Activated T-helper 1 cell treated with anti-CD3 and anti-CD28 coated beads, Interleukin-12 subunit alpha, Interleukin-12 subunit beta, Interleukin-2, Interleukin-4 antibody, amounts not matched to agents 30 ng/mL and 10 ng/mL and 1 ng/mL, durations not matched to agents 14 hours and 24 hours and 36 hours (primary cell): ENCODE measurements at regions of chr9 and their contacts with region 1.

Region 1: GRCh38 chr9:111916234-111916645 is 19.6 kb downstream of the UGCG start:
- DNase-seq: no peak
- H3K4me3 Mint-ChIP-seq: peak overlapping the region; percentile 2
- H3K27ac Mint-ChIP-seq: peak overlapping the region; percentile 74
- H3K4me1 Mint-ChIP-seq: peaks cover 54% of the 10 kb centered on the region
- H3K27me3 Mint-ChIP-seq: peaks cover 4% of the 10 kb centered on the region

Region 2: DNA sequence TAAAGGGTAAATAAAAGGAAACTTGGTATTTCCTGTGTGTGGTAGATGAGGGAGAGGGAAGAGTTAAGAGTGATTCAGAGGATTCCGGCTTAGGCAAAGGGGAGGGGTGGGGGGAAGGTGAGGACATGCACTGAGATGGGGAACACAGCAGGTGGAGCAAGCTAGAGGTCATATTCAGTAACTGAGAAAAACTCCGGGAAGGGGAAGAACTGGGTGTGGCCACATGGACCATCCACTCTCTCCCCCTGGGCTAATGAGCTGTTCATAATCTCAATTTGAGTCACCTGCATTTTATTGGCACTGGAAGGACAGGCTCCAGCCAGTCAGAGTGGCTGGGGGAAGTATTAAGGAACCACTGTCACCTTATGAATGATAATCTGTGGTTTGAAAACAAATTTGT is 64.7 kb before region 1 on chr9:
- intact Hi-C with region 1: no loop called
- DNase-seq: no peak
- H3K4me3 Mint-ChIP-seq: no peak overlapping the region
- H3K27ac Mint-ChIP-seq: no peak overlapping the region
- H3K4me1 Mint-ChIP-seq: no peaks in the 10 kb centered on the region
- H3K27me3 Mint-ChIP-seq: peaks cover 4% of the 10 kb centered on the region

Region 3: GRCh38 chr9:111870774-111871498 is 45.3 kb before region 1 on chr9:
- intact Hi-C with region 1: loop called (anchors 1 kb)
- DNase-seq: peak; percentile 6
- H3K4me3 Mint-ChIP-seq: no peak overlapping the region
- H3K27ac Mint-ChIP-seq: peak overlapping the region; percentile 49
- H3K4me1 Mint-ChIP-seq: peaks cover 20% of the 10 kb centered on the region
- H3K27me3 Mint-ChIP-seq: peaks cover 30% of the 10 kb centered on the region

Region 4: DNA sequence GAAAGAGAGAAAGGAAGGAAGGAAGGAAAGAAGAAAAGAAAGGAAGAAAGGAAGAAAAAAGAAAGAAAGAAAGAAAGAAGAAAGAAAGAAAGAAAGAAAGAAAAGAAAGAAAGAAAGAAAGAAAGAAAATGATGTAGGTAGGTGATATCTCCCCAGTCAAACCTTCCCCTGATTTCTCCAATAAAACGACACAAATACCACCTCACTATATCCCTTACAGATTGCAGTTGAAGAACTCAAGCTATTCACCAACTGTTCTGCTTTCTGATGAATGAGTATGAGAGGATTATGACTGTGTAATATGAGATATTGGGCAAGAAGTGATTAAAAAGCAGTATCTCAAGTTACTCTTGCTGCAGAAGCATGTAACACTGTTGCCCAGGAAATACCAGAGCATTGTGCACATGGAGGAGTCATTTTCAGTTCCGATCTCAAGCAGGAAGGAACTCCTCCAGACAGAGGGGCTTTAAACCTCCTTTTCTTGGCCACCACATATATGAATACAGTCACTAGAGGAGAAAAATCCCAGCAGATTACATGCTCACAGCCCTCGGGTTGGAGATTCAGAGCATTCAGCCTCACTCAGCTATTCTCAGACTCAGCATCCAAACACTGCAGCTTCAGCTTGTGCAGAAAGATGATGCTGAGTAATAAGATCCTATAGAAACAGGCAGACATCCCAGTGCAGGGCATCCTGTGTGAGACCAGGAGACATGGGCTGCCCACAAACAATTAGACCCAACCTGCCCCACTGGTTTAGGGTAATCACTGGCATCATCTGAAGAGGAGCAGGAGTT is 41.8 kb after region 1 on chr9:
- intact Hi-C with region 1: loop called (anchors 1 kb)
- DNase-seq: no peak
- H3K4me3 Mint-ChIP-seq: peak overlapping the region; percentile 29
- H3K27ac Mint-ChIP-seq: no peak overlapping the region
- H3K4me1 Mint-ChIP-seq: peaks cover 18% of the 10 kb centered on the region
- H3K27me3 Mint-ChIP-seq: peaks cover 22% of the 10 kb centered on the region

Region 5: GRCh38 chr9:112028280-112029221 is 112.3 kb after region 1 on chr9:
- intact Hi-C with region 1: loop called (anchors 1 kb)
- DNase-seq: peak; percentile 6
- H3K4me3 Mint-ChIP-seq: peak overlapping the region; percentile 5
- H3K27ac Mint-ChIP-seq: peak overlapping the region; percentile 49
- H3K4me1 Mint-ChIP-seq: peaks cover 48% of the 10 kb centered on the region
- H3K27me3 Mint-ChIP-seq: peaks cover 4% of the 10 kb centered on the region

Region 6: GRCh38 chr9:112218908-112219307 is 302.7 kb after region 1 on chr9:
- intact Hi-C with region 1: loop called (anchors 10 kb)
- DNase-seq: peak; percentile 9
- H3K4me3 Mint-ChIP-seq: peak overlapping the region; percentile 19
- H3K27ac Mint-ChIP-seq: peak overlapping the region; percentile 70
- H3K4me1 Mint-ChIP-seq: peaks cover 26% of the 10 kb centered on the region
- H3K27me3 Mint-ChIP-seq: no peaks in the 10 kb centered on the region

Region 7: DNA sequence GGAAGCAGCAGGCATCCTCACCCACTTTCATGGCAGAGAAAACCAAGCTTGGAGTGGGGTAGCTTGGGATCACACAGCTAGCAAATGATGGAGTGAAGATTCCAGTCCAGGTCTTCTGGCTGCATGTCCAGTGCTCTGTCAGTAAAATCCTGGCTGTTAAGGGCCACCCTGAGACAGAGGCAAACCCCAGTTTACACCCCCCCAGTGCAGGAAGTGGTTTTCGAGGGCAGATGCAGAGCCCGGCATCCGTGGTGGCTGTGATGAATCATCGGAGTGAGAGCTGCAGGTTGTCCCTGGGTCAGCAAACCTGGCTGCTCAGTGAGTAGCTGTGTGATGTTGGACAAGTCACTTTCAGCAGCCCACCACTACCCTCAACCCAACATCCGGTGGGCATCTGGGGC is 1662.6 kb after region 1 on chr9:
- intact Hi-C with region 1: loop called (anchors 10 kb)
- DNase-seq: peak; percentile 83
- H3K4me3 Mint-ChIP-seq: peak overlapping the region; percentile 69
- H3K27ac Mint-ChIP-seq: peak overlapping the region; percentile 91
- H3K4me1 Mint-ChIP-seq: peaks cover 68% of the 10 kb centered on the region
- H3K27me3 Mint-ChIP-seq: no peaks in the 10 kb centered on the region